ENCODE measurements at regions of chr19 and their contacts with region 1.

Region 1: DNA sequence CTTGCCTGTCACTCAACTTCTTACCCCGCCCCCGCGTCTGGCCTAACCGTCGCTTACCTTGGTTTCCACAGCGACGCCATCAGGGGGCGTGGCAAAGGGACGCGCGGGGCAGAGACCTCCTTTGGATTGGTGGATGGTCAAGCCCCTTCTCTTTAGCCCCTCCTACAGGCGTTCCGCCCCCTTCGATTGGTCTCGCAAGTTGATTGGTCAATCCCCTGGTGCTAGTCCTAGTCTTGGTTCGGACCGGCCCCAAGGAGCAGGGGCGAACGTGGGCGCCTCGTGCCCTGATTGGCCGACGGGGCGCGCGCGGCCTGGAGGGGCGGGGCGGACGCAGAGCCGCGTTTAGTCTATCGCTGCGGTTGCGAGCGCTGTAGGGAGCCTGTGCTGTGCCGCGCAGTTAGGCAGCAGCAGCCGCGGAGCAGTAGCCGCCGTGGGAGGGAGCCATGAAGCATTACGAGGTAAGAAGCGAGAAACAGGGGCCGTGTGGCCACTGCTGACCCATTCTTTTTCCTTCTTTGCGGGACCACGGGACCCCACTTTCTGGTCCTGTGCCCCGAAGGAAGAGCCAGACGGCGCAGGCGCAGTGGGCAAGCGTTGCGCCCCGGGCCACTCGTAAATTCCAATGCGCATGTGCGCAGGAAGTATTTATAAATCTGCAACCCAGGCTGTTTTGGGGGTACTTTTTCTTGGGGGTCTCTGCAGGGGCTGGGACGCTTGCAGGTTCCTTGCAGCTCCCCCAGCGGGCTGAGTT is at the start of gene TECR:
- DNase-seq: peak; percentile 99
- CTCF ChIP-seq: no peak

Region 2: DNA sequence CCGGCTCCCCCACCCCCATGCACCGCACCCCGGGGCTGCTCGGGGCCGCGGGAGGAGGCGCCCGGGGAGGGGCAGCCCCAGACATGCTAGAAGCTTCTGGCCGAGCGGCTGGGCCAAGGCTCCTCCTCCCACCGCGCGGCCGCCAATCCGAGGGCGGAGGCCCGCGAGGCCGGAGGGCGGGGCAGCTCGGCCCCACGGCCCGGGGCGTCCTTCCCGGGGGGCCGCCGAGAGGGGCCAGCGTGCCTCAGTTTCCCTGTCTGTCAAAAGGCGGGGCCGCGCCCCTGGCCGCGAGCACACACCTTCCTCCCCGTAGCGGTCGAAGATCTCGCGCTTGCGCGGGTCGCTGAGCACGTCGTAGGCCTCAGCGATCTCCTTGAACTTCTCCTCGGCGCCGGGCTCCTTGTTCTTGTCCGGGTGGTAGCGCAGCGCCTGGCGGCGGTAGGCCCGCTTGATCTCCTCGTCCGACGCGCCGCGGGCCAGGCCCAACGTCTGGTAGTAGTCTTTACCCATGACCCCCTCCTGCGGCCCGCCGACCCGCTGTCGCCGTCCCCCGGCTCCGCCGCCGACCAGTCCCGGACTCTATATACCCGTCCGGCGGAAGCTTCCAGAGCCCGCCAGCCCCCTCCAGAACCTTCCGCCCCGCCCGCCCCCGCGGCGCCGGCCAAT is 11.5 kb before region 1 on chr19 and contains the start of gene DNAJB1:
- CTCF ChIA-PET with region 1: interaction called, 10 read pairs
- POLR2A ChIA-PET with region 1: interaction called, 9 read pairs
- DNase-seq: peak; percentile 93
- CTCF ChIP-seq: no peak